ENCODE measurements at regions of chr11 and their contacts with region 1.

Region 1: DNA sequence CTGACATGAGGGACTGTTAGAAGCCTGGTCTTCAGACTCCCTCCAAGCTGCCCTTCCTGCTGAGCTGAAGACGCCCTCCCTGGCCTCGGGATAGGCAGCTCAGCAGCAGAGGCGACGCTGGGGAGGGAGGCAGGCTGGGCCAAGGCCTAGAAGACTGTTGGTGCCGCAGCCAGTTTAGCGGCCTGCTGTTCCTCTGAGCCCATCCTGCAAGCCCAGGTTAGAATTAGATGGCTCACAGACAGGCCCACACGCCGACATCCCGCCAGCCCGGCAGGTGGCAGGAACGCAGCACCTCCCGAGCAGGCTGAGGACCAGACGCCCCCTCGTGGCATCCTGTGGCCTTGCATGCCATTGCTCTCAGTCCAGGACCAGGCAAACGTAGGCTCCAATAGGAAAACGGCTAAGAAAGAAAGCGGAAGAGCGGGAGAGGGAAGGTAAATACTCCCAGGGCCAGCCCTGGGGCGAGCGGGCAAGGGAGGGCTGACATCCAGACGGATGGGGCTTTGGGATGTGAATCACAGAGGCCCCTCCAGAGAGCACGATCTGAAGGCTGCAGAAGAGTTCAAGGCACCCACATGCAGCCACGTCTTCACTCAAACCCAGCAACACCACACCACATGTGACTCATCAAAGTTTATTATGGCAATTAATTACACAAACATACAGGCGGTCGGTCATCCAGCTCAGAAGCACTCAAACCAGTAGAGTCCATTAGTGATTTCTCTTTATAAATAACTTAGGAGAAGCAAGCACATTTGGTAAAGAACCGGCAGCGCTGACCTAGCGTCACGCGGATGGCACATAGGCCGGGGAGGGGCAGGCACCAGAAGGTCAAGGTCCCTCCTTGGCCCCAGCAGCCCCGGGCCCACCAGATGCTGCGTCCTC is 27.6 kb downstream of the CD5 start:
- DNase-seq: peak; percentile 90
- H3K4me3 ChIP-seq: peak overlapping the region in 1 of 2 donors; percentile 10
- H3K27ac ChIP-seq: peak overlapping the region; percentile 66 to 74
- H3K4me1 ChIP-seq: no peaks in the 10 kb centered on the region
- H3K27me3 ChIP-seq: no peaks in the 10 kb centered on the region
- CTCF ChIP-seq: peak; percentile 99 to 100 (median 100)
- POLR2A ChIP-seq: no peak

Region 2: DNA sequence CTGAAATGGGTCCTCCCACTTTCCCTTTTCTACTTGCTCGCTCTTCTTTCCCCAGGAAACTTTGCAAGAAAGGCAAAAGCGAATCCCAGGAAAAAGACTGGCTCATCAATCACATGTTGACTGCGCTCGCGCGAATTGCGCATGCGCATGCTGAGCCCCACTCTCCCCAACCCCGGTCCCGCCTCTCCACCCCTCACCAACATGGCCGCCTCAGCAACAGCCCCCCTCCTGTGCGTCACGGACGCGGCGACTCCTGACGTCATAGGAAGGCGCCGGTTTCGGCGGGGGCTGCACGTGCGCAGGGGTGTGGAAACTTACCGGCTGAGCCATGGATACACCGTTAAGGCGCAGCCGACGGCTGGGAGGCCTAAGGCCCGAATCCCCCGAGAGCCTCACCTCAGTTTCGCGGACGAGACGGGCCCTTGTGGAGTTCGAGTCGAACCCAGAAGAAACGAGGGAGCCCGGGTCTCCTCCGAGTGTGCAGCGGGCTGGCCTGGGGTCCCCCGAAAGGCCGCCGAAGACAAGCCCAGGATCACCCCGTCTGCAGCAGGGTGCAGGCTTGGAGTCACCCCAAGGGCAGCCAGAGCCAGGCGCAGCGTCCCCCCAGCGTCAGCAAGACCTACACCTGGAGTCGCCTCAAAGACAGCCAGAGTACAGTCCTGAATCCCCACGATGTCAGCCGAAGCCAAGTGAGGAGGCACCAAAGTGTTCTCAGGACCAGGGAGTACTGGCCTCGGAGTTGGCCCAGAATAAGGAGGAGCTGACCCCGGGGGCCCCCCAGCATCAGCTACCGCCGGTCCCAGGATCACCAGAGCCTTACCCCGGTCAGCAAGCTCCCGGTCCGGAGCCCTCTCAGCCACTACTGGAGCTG is 287.8 kb before region 1 on chr11 and contains the start of gene CCDC86:
- intact Hi-C with region 1: loop called (anchors 5 kb)
- DNase-seq: peak; percentile 95
- H3K4me3 ChIP-seq: peak within 1 kb of the TSS; percentile 51 to 63
- H3K27ac ChIP-seq: peak within 1 kb of the TSS; percentile 70 to 79
- H3K4me1 ChIP-seq: peaks cover 22% of the 10 kb centered on the region
- H3K27me3 ChIP-seq: no peaks in the 10 kb centered on the region
- CTCF ChIP-seq: peak in 2 of 4 experiments; percentile 12 to 34
- POLR2A ChIP-seq: peak; percentile 29
- total RNA-seq, gene CCDC86: 48.7 to 56.7 TPM

Region 3: DNA sequence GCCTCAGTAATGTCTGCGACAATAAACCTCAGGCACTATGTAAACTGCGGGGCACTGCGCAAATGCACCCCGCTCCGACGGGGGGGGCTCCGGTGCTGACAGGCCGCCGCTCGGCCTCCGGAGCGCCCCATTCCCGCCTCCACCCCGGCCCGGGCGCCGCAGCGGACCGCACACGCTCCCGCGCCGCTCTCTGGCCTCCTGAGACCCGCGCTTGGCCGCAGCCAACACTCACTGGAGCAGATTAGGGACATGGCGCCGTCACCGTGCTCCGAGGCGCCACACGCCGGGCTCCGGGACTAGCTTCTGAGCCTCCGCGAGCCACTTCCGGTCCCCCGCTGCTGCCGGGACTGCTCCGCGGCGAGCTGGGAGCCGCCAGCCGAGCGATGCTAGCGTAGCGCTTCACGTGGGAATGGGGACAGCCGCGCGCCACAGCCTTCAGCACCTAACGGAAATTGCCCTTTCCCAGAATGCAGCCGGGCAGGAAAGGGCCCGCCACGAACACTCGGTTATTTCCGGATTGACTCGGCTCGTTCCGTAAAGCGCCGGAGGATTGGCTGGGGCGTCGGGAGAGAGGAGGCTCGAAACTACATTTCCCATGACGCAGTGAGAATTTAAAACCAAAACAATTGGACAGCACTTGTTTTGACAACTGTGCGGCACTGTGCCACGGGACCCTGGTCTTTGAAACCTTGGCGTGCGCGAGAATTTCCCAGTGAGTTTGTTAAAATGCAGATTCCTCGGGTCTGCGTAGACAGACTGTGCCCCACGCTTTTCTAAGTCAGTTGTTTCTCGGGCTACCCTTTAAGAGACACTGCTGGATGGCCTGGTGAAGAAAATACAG is 223.5 kb before region 1 on chr11 and contains the start of gene PRPF19:
- intact Hi-C with region 1: loop called (anchors 5 kb)
- DNase-seq: peak; percentile 96
- H3K4me3 ChIP-seq: peak within 1 kb of the TSS; percentile 93
- H3K27ac ChIP-seq: peak within 1 kb of the TSS; percentile 94 to 95
- H3K4me1 ChIP-seq: peaks cover 9% of the 10 kb centered on the region
- H3K27me3 ChIP-seq: no peaks in the 10 kb centered on the region
- CTCF ChIP-seq: peak in 1 of 4 experiments; percentile 8
- POLR2A ChIP-seq: peak; percentile 74
- total RNA-seq, gene PRPF19: 147 to 181 TPM

Region 4: DNA sequence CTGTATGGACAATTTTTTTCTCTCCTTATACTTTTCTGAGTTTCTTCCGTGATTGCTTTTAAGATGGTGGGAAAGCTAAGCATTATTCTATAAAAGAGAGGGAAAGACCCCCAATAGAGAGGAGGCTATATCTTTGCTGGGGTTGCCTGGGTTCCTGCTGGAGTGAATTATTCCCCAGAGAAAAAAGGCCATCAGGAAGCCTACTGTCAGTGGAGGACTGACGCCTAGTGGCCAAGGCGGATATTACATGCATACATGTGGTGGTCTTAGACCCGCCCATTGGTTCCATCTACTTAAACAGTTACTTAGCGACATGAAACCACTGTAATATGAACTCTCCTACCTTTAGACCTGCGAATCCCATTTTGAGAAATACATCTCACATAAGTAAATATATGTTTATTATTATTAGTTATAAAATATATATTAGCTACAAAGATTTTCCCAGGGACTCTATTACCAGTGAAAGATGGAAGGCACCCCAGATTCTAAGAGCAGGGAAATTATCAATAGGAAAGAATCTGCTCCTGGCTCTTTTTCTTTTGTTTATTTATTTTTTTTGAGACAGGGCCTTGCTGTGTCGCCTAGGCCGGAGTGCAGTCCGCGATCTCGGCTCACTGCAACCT is 57.7 kb after region 1 on chr11:
- intact Hi-C with region 1: loop called (anchors 5 kb)
- DNase-seq: peak; percentile 69
- H3K4me3 ChIP-seq: no peak overlapping the region
- H3K27ac ChIP-seq: no peak overlapping the region
- H3K4me1 ChIP-seq: no peaks in the 10 kb centered on the region
- H3K27me3 ChIP-seq: no peaks in the 10 kb centered on the region
- CTCF ChIP-seq: peak; percentile 72 to 93 (median 88)
- POLR2A ChIP-seq: no peak